AG04449 (cell line): ENCODE measurements at regions of chr1 and their contacts with region 1.

Region 1: GRCh38 chr1:159869173-159869572 is 6.7 kb upstream of the VSIG8 start:
- DNase-seq: no peak
- H3K4me3 ChIP-seq: no peak overlapping the region
- CTCF ChIP-seq: no peak

Region 2: DNA sequence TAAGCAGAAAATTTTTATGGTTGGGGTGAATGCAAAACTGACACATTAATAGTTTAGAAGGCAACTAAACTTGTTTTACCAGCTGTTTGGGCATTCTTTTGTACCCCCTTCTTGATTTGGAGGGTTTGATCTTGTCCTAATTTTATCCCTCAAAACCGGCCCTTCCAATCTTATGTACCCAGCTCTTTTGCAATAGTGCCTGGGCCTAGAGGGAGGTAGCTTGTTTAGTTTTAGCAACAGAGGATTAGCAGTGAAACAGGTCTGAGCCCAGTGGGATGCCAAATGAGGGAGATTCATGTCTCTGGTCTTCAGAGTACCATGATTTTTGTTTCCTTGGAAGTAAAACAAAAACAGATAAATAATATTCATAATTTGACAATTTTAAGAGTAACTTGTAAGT is 199.8 kb before region 1 on chr1:
- CTCF ChIA-PET with region 1: no interaction called
- POLR2A ChIA-PET with region 1: no interaction called
- DNase-seq: no peak
- H3K4me3 ChIP-seq: no peak overlapping the region
- CTCF ChIP-seq: no peak

Region 3: DNA sequence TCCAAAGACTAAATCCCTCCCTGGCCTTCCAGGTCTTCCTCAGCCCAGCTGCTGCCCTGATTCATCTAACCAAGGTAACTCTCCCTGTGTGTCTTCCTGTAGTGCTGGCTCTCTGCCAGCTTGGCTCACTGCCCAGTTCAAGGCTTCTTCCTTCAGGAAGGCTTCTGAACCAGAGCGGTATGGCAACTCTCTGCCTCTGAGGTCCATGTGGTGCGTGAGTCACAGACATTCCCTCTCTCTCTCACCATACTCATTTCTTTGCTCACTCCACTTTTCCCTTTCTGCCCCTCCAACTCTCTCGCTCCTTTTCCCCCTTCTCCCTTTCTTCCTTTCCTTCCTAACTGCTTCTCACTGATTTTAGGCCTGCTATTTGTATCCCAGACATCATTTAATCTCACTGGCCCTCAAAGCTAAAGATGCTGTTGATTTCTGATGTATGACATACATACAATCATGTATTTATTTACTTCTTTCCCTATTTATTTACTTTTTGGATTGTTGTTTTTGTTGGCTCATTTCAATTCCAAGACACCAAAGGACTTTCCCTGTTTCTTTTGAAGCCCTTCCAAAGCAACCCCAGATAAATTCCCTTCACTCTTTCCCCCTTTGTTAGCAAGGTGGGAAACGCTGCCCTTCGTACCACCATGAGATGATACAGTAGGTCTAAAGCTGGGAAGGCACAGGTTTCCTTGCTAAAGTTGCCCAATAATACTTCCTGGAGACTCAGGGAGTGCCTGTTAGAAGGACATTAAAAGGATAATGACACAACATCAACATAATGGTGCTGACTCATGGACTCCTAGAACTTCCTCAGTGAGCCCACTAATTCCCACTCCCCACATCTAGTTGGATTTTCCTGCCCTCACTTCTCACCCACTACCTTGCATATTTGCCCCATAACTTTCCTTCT is 13.0 kb after region 1 on chr1:
- CTCF ChIA-PET with region 1: interaction called, 10 read pairs
- POLR2A ChIA-PET with region 1: no interaction called
- DNase-seq: peak; percentile 83
- H3K4me3 ChIP-seq: no peak overlapping the region
- CTCF ChIP-seq: no peak